ENCODE measurements at regions of chr12 and their contacts with region 1.

Region 1: GRCh38 chr12:112219195-112219594 is 93.8 kb downstream of the TRAFD1 start:
- DNase-seq: no peak
- ATAC-seq: peak; percentile 35; the same call in 1 of the 2 replicates
- H3K4me3 ChIP-seq: no peak overlapping the region
- H3K27ac ChIP-seq: no peak overlapping the region
- H3K4me1 ChIP-seq: no peaks in the 10 kb centered on the region
- H3K27me3 ChIP-seq: no peaks in the 10 kb centered on the region
- CTCF ChIP-seq: no peak

Region 2: GRCh38 chr12:112163011-112163410 is 56.2 kb before region 1 on chr12:
- CTCF ChIA-PET with region 1: no interaction called
- POLR2A ChIA-PET with region 1: no interaction called
- in situ Hi-C with region 1: no loop called
- intact Hi-C with region 1: no loop called
- DNase-seq: no peak
- ATAC-seq: no peak
- H3K4me3 ChIP-seq: no peak overlapping the region
- H3K27ac ChIP-seq: no peak overlapping the region
- H3K4me1 ChIP-seq: no peaks in the 10 kb centered on the region
- H3K27me3 ChIP-seq: no peaks in the 10 kb centered on the region
- CTCF ChIP-seq: no peak

Region 3: GRCh38 chr12:112447106-112447505 is 227.9 kb after region 1 on chr12:
- CTCF ChIA-PET with region 1: no interaction called
- POLR2A ChIA-PET with region 1: interaction called, 13 read pairs
- in situ Hi-C with region 1: no loop called
- intact Hi-C with region 1: no loop called
- DNase-seq: no peak
- ATAC-seq: no peak
- H3K4me3 ChIP-seq: no peak overlapping the region
- H3K27ac ChIP-seq: no peak overlapping the region
- H3K4me1 ChIP-seq: no peaks in the 10 kb centered on the region
- H3K27me3 ChIP-seq: no peaks in the 10 kb centered on the region
- CTCF ChIP-seq: no peak